Left ventricle myocardium superior (tissue), 1 donor: ENCODE measurements at regions of chr22 and their contacts with region 1.

Region 1: DNA sequence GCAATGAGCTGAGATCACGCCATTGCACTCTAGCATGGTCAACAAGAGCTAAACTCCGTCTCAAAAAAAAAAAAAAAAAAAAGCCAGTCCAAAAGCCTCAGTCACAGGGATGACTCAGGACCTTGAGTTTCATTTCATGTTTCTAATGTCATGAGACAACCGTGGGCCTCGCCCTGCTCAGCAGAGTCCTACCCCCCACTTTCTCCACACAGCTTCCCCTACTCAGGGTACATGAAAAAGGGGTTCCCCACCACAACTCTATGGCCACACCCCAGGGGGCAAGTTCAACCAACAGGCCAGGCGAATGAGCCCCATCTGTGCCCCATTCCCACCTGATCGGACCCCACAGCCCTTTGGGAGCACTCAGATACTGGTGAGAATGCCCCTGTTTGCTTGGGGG is 24.3 kb upstream of the ADA2 start:
- DNase-seq: no peak
- ATAC-seq: peak; percentile 61

Region 2: GRCh38 chr22:17303840-17304779 is 60.6 kb after region 1 on chr22:
- intact Hi-C with region 1: loop called (anchors 10 kb)
- DNase-seq: no peak
- ATAC-seq: no peak